ENCODE measurements at regions of chr9 and their contacts with region 1.

Region 1: DNA sequence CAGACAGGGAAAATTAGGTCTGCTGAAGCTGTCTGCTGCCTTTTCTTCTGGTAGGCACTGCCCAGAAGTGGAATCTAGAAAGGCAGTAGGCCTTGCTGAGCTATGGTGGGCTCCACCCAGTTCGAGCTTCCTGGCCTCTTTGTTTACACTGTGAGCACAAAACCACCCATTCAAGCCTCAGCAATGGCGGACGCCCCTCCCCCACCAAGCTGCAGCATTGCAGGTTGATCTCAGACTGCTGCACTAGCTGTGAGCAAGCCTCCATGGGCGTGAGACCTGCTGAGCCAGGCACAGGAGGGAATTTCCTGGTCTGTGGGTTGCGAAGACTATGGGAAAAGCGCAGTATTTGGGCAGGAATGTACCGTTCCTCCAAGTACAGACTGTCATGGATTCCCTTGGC is 18.5 kb downstream of the AGTPBP1 start:
- DNase-seq: peak in 8 of 9 donors; percentile 40 to 89 (median 81)
- ATAC-seq: peak; percentile 81
- H3K4me3 ChIP-seq: peak overlapping the region; percentile 14
- H3K4me3 Mint-ChIP-seq: peak overlapping the region; percentile 26 to 81 (median 73)
- H3K27ac ChIP-seq: peak overlapping the region; percentile 55
- H3K27ac Mint-ChIP-seq: peak overlapping the region; percentile 63 to 96 (median 84)
- H3K4me1 ChIP-seq: peaks cover 19 to 23% of the 10 kb centered on the region in 2 donors
- H3K4me1 Mint-ChIP-seq: peaks cover 41 to 84% (median 66%) of the 10 kb centered on the region in 7 donors
- H3K27me3 ChIP-seq: no peaks in the 10 kb centered on the region
- H3K27me3 Mint-ChIP-seq: no peaks in the 10 kb centered on the region

Region 2: DNA sequence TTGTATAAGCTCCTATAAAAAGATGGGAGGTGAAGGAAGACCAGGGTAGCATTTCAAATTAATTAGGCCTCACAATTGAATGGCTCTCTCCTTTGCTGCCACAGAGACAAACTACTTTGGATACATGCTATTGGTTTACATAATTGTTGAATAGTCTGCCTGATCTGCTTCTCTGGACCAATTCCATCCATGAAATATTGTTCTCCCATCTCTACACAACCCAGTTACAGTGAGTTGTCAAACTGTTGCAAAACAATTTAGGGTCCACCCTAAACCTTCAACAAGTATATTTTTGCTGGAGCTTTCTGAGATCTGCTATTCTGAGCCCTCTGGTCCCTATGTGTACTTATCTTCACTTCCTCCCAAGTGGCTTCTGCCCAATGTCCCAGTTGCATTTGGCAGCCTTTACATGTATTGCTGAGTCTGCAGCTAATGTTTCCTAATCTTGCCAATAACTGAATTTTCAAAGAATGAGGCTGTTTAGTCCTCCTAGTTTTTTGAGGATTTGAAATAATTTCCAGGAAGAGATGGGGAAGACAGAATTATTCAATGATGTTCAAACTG is 20.4 kb before region 1 on chr9:
- CTCF ChIA-PET with region 1: interaction called, 6 read pairs
- POLR2A ChIA-PET with region 1: interaction called, 6 read pairs
- intact Hi-C with region 1: loop called in 1 of 2 experiments (anchors 2 kb)
- DNase-seq: no peak
- ATAC-seq: no peak
- H3K4me3 ChIP-seq: no peak overlapping the region
- H3K4me3 Mint-ChIP-seq: no peak overlapping the region
- H3K27ac ChIP-seq: no peak overlapping the region
- H3K27ac Mint-ChIP-seq: peak overlapping the region in 3 of 9 donors; percentile 17 to 56 (median 44)
- H3K4me1 ChIP-seq: peaks cover 0 to 3% of the 10 kb centered on the region in 2 donors
- H3K4me1 Mint-ChIP-seq: peaks cover 21 to 64% (median 46%) of the 10 kb centered on the region in 7 donors
- H3K27me3 ChIP-seq: no peaks in the 10 kb centered on the region
- H3K27me3 Mint-ChIP-seq: no peaks in the 10 kb centered on the region